HCT116 (cell line): ENCODE measurements at regions of chr10 and their contacts with region 1.

Region 1: GRCh38 chr10:103564776-103565520 is 71.4 kb downstream of the NEURL1 start:
- DNase-seq: peak; percentile 42
- ATAC-seq: peak; percentile 97
- H3K4me3 ChIP-seq: no peak overlapping the region
- H3K27ac ChIP-seq: no peak overlapping the region
- H3K4me1 ChIP-seq: peaks cover 0 to 15% of the 10 kb centered on the region in 2 experiments; a peak in 1 of 4 replicates
- H3K27me3 ChIP-seq: peaks cover 4% of the 10 kb centered on the region; the same call in 1 of the 2 replicates
- CTCF ChIP-seq: peak; percentile 79 to 100 (median 99); a peak in 5 of 6 replicates
- POLR2A ChIP-seq: no peak
- RAD21 ChIP-seq: peak; percentile 91

Region 2: GRCh38 chr10:103507235-103508191 is 57.4 kb before region 1 on chr10:
- CTCF ChIA-PET with region 1: interaction called, 3 read pairs
- POLR2A ChIA-PET with region 1: no interaction called
- RAD21 ChIA-PET with region 1: no interaction called
- intact Hi-C with region 1: loop called (anchors 2 kb)
- DNase-seq: no peak
- ATAC-seq: peak; percentile 16; the same call in 1 of the 2 replicates
- H3K4me3 ChIP-seq: no peak overlapping the region
- H3K27ac ChIP-seq: no peak overlapping the region
- H3K4me1 ChIP-seq: peaks cover 11 to 19% of the 10 kb centered on the region in 2 experiments
- H3K27me3 ChIP-seq: no peaks in the 10 kb centered on the region
- CTCF ChIP-seq: peak in 2 of 3 experiments; percentile 20 to 25; a peak in 1 of 6 replicates
- POLR2A ChIP-seq: no peak
- RAD21 ChIP-seq: no peak

Region 3: GRCh38 chr10:103548581-103549348 is 16.2 kb before region 1 on chr10:
- CTCF ChIA-PET with region 1: interaction called, 19 read pairs
- POLR2A ChIA-PET with region 1: no interaction called
- RAD21 ChIA-PET with region 1: no interaction called
- intact Hi-C with region 1: no loop called
- DNase-seq: no peak
- ATAC-seq: no peak
- H3K4me3 ChIP-seq: no peak overlapping the region
- H3K27ac ChIP-seq: no peak overlapping the region
- H3K4me1 ChIP-seq: peaks cover 4 to 20% of the 10 kb centered on the region in 2 experiments; a peak in 3 of 4 replicates
- H3K27me3 ChIP-seq: no peaks in the 10 kb centered on the region
- CTCF ChIP-seq: no peak
- POLR2A ChIP-seq: no peak
- RAD21 ChIP-seq: no peak